ENCODE measurements at regions of chr9 and their contacts with region 1.

Region 1: DNA sequence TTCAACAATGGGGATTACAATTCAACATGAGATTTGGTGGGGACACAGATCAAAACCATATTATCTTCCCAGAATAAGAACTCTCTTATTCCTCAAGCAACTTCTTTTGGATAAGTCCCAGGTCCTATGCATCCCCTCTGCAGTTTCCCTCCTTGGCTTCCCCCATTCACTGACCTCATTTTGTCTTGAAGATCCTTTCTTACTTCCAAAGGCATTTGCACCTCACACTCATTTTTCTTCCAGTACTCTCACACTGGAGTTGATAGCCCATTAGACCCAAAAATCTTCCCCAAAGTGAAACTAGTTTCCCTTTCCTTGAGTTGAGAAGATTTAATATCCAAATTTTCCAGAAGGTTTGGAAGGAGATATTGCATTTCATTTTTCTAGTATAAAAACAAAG is 178.0 kb upstream of the DAPK1 start:
- DNase-seq: no peak
- H3K4me3 ChIP-seq: no peak overlapping the region
- H3K4me3 Mint-ChIP-seq: no peak overlapping the region
- H3K27ac ChIP-seq: no peak overlapping the region
- H3K27ac Mint-ChIP-seq: no peak overlapping the region
- H3K4me1 ChIP-seq: no peaks in the 10 kb centered on the region
- H3K4me1 Mint-ChIP-seq: no peaks in the 10 kb centered on the region
- H3K27me3 ChIP-seq: no peaks in the 10 kb centered on the region
- H3K27me3 Mint-ChIP-seq: peaks cover 5 to 6% (median 5%) of the 10 kb centered on the region in 3 donors
- CTCF ChIP-seq: no peak

Region 2: DNA sequence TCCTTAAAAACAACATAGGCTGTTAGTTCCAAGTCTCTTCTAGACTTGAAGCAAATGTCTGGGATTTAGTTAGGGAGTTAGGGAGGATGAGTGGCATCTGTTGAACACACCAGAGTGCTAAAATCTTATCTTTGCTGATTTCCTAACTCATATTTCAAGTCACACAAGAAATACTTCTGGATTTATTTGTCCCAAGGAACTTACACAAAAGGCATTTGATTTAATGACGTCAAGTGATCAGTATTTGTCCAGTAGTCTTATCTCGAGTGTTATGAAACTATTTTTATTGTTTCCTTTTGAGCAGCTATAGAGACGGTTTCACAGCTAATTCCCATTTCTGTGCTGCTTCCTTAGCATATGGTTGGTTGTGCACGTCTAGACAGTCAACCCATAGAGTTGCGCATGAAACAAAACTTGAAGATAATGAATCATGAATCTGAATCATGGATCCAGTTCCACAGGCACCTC is 825.0 kb before region 1 on chr9:
- intact Hi-C with region 1: loop called (anchors 5 kb)
- DNase-seq: no peak
- H3K4me3 ChIP-seq: no peak overlapping the region
- H3K4me3 Mint-ChIP-seq: no peak overlapping the region
- H3K27ac ChIP-seq: no peak overlapping the region
- H3K27ac Mint-ChIP-seq: no peak overlapping the region
- H3K4me1 ChIP-seq: no peaks in the 10 kb centered on the region
- H3K4me1 Mint-ChIP-seq: no peaks in the 10 kb centered on the region
- H3K27me3 ChIP-seq: peaks cover 0 to 4% of the 10 kb centered on the region in 2 donors
- H3K27me3 Mint-ChIP-seq: peaks cover 2 to 6% (median 5%) of the 10 kb centered on the region in 3 donors
- CTCF ChIP-seq: no peak

Region 3: GRCh38 chr9:87405677-87406542 is 86.3 kb after region 1 on chr9:
- intact Hi-C with region 1: no loop called
- DNase-seq: peak; percentile 77 to 91 (median 86)
- H3K4me3 ChIP-seq: peak overlapping the region in 1 of 3 experiments; percentile 35
- H3K4me3 Mint-ChIP-seq: peak overlapping the region in 1 of 2 donors; percentile 54
- H3K27ac ChIP-seq: peak overlapping the region; percentile 49 to 93
- H3K27ac Mint-ChIP-seq: peak overlapping the region; percentile 91 to 97 (median 94)
- H3K4me1 ChIP-seq: peaks cover 30 to 36% of the 10 kb centered on the region in 2 donors
- H3K4me1 Mint-ChIP-seq: peaks cover 40% of the 10 kb centered on the region
- H3K27me3 ChIP-seq: no peaks in the 10 kb centered on the region
- H3K27me3 Mint-ChIP-seq: peaks cover 1 to 3% (median 2%) of the 10 kb centered on the region in 3 donors
- CTCF ChIP-seq: no peak

Region 4: GRCh38 chr9:87451018-87451565 is 131.4 kb after region 1 on chr9:
- intact Hi-C with region 1: no loop called
- DNase-seq: no peak
- H3K4me3 ChIP-seq: no peak overlapping the region
- H3K4me3 Mint-ChIP-seq: no peak overlapping the region
- H3K27ac ChIP-seq: no peak overlapping the region
- H3K27ac Mint-ChIP-seq: no peak overlapping the region
- H3K4me1 ChIP-seq: peaks cover 0 to 2% of the 10 kb centered on the region in 2 donors
- H3K4me1 Mint-ChIP-seq: peaks cover 3% of the 10 kb centered on the region
- H3K27me3 ChIP-seq: no peaks in the 10 kb centered on the region
- H3K27me3 Mint-ChIP-seq: peaks cover 0 to 1% (median 0%) of the 10 kb centered on the region in 3 donors
- CTCF ChIP-seq: no peak

Measured in CD14-positive monocyte (primary cell).